ENCODE measurements at regions of chr7 and their contacts with region 1.

Region 1: DNA sequence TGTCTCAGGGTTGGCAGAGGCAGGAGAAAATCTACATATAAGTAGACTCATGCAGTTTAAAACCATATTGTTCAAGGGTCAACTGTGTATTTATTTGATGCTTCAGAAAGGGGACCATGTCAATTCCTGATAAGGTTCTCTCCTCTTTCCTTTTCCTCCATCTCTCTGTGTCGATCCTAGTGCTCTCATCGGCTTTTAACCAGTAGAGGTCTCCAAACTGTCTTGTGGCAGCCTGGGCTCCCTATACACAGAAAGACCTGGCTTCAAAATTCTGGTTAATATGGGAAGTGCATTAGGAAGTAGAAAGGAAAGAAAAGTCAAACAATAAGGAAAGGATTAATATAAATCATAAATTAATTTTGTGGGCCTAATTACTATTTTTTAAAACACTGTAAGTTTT is 304.4 kb upstream of the C7orf33 start:
- DNase-seq: no peak
- ATAC-seq: no peak
- H3K4me3 ChIP-seq: no peak overlapping the region
- H3K27ac ChIP-seq: no peak overlapping the region
- H3K4me1 ChIP-seq: no peaks in the 10 kb centered on the region
- H3K27me3 ChIP-seq: peaks cover 0 to 7% (median 0%) of the 10 kb centered on the region in 7 donors
- CTCF ChIP-seq: peak in 6 of 9 donors; percentile 19 to 58 (median 40)

Region 2: GRCh38 chr7:148472406-148472805 is 186.3 kb after region 1 on chr7:
- intact Hi-C with region 1: loop called in 1 of 10 experiments (anchors 10 kb)
- DNase-seq: no peak
- ATAC-seq: no peak
- H3K4me3 ChIP-seq: no peak overlapping the region
- H3K27ac ChIP-seq: no peak overlapping the region
- H3K4me1 ChIP-seq: no peaks in the 10 kb centered on the region
- H3K27me3 ChIP-seq: peaks cover 0 to 13% (median 0%) of the 10 kb centered on the region in 7 donors
- CTCF ChIP-seq: no peak

Region 3: GRCh38 chr7:148485618-148486017 is 199.5 kb after region 1 on chr7:
- intact Hi-C with region 1: loop called in 1 of 10 experiments (anchors 10 kb)
- DNase-seq: no peak
- ATAC-seq: no peak
- H3K4me3 ChIP-seq: no peak overlapping the region
- H3K27ac ChIP-seq: no peak overlapping the region
- H3K4me1 ChIP-seq: peaks cover 0 to 2% (median 0%) of the 10 kb centered on the region in 9 donors
- H3K27me3 ChIP-seq: peaks cover 0 to 14% (median under 1%) of the 10 kb centered on the region in 7 donors
- CTCF ChIP-seq: peak in 1 of 9 donors; percentile 7